ENCODE measurements at regions of chr22 and their contacts with region 1.

Region 1: DNA sequence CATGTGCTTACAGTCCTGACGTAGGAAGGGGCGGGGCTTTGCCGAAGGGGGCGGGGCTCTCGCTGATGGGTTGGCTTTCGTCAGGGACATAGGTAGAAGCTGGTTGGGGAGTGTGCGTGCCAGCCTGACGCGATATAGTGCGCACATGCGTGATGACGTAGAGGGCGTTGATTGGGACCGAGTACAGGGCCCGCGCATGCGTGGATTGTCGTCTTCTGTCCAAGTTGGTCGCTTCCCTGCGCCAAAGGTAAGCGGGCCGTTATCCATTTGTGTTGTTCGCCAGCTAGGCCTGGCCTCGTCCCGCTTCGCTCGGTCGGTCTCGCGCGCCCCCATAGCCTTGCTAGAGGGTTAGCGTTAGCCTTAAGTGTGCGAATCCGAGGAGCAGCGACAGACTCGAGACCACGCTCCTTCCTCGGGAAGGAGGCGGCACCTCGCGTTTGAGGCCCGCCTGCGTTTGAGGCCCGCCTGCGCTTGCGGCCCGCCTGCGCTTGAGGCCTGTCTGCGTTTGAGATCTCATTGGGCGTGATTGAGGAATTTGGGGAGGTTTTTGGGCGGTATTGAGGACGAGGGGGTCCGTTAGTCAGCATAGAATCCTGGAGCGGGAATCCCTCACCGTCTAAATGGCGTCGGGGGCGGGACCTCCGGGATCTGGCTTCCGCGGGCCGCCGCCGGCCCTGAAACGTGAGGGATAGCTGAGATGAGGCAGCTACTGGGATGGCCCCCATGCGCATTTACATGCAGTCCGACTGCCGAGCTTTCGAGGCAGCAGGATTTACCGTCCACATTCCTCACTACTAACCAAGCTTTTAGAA is at the start of gene XRCC6:
- DNase-seq: peak; percentile 99
- ATAC-seq: peak; percentile 92
- H3K4me3 Mint-ChIP-seq: peak within 1 kb of the TSS; percentile 98
- H3K27ac Mint-ChIP-seq: peak within 1 kb of the TSS; percentile 98
- H3K4me1 Mint-ChIP-seq: peaks cover 38% of the 10 kb centered on the region
- H3K27me3 Mint-ChIP-seq: no peaks in the 10 kb centered on the region
- CTCF ChIP-seq: no peak
- total RNA-seq, gene XRCC6: 297 and 319 TPM in 2 replicates

Region 2: DNA sequence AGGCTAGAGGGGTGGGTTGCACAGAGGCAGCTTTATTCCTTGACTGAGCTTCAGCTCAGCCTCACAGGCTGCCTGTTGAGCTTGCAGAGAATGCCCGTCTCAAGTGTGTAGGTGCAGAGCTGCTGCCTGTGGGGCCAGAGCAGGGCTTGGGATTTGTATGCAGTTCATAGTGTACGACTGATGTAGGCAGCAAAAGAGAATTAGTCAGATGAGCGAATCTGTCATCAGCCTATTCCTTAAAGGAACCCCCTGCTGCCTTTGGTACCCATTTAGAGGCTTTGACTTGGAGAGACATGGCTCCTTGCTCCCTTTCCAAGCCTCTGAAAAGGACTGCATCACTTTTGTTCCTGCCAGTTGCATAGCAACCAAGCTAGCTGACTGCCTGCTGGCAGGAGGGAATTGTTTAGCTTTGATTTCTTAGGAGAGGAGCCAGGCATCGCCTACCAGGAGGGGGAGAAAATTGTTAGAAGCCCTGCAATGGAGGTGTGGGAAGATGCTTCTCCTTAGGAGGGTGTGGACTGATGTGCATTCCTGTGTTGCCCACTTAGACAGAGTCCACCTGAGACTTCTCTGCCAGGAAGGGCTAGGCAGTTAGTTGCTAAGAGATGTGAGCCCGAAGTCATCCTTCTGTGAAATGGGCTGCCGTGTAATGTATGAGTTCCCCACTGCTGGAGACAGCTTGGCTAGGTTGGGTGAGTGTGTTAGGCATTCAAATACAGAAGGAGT is 141.5 kb before region 1 on chr22:
- CTCF ChIA-PET with region 1: no interaction called
- POLR2A ChIA-PET with region 1: interaction called, 15 read pairs
- intact Hi-C with region 1: no loop called
- DNase-seq: no peak
- ATAC-seq: no peak
- H3K4me3 Mint-ChIP-seq: peak overlapping the region; percentile 79
- H3K27ac Mint-ChIP-seq: peak overlapping the region; percentile 96
- H3K4me1 Mint-ChIP-seq: peaks cover 87% of the 10 kb centered on the region
- H3K27me3 Mint-ChIP-seq: no peaks in the 10 kb centered on the region
- CTCF ChIP-seq: no peak

Region 3: DNA sequence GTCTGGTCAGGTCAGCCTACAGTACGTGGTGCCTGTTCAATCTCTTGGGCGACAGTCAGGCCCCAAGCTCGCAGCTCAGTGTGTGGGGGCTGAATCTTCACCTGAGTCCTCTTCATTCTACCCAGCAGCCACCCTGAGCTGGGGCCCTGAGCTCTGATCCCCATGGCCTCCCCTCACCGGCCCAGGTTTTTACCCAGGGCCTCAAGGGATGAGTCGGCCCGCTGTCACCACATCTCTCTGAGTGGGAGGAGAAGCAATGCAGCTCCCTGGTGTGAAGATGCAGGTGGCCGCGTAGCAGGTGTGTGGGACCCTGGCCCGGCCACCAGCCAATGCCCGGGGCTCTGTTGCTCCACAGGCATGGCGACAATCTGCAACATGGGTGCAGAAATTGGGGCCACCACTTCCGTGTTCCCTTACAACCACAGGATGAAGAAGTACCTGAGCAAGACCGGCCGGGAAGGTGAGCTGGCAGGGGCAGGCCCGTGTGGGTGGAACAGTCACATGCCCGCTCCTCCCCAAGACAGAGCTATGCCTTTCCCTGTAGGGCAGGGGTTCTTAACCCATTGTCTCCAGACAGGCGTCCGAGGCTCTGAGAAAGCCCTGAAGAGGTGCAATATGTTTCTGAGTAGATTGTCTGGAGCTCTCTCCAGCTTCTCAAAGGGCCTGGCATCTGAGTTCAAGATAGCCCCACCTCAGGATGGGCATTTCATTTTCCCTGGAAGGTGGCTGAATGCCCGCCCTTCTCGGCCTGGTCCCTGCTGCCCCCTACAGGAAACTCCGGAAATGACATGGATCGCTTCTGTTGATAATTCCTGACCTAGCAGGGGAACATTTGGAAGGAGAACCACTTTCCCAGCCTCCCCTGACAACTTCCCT is 103.9 kb before region 1 on chr22:
- CTCF ChIA-PET with region 1: no interaction called
- POLR2A ChIA-PET with region 1: no interaction called
- intact Hi-C with region 1: no loop called
- DNase-seq: peak; percentile 41
- ATAC-seq: peak; percentile 60
- H3K4me3 Mint-ChIP-seq: no peak overlapping the region
- H3K27ac Mint-ChIP-seq: no peak overlapping the region
- H3K4me1 Mint-ChIP-seq: no peaks in the 10 kb centered on the region
- H3K27me3 Mint-ChIP-seq: no peaks in the 10 kb centered on the region
- CTCF ChIP-seq: no peak

Region 4: DNA sequence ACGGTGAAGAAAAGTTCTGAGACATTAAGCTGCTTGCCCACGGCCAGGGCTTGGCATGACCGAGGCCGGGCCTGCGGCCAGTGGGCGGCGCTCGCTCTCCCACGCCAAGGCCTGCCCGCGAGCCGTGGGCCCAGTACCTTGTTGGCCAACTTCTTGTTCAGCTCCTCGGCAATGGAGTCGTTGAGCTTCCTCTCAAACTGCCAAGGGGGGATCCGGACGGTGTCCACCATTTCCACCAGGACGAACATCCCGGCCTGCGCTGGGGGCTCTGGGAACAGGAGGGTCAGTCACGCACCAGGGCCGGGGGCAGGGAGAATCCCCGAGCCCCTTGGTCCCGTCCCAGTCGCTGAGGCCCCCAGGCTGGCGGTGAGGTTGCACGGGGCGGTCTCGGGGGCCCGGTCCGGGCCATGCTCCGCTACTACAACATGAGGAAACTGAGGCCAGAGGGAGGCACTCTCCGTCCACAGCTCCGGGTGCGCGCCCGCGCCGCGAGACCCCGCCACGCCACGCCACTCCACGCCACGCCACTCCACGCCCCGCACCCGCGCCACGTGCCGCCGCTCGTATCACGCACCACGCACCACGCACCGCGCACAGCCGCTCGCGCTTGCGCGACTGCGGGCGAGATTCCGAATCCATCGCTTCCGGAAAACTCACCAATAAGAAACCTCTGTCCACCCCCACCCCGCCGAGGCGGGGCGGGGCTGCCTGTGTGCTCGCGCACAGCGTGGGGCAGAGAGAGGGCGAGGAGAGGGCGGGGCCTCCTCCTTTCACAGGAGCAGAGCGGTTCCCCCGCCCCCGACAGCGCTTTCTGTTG is 77.2 kb before region 1 on chr22 and contains the start of gene POLR3H:
- CTCF ChIA-PET with region 1: interaction called, 9 read pairs
- POLR2A ChIA-PET with region 1: interaction called, 19 read pairs
- intact Hi-C with region 1: loop called (anchors 1 kb)
- DNase-seq: peak; percentile 93
- ATAC-seq: peak; percentile 99
- H3K4me3 Mint-ChIP-seq: peak within 1 kb of the TSS; percentile 96
- H3K27ac Mint-ChIP-seq: peak within 1 kb of the TSS; percentile 86
- H3K4me1 Mint-ChIP-seq: peaks cover 43% of the 10 kb centered on the region
- H3K27me3 Mint-ChIP-seq: no peaks in the 10 kb centered on the region
- CTCF ChIP-seq: no peak
- total RNA-seq, gene POLR3H: 39.0 and 43.9 TPM in 2 replicates

Region 5: DNA sequence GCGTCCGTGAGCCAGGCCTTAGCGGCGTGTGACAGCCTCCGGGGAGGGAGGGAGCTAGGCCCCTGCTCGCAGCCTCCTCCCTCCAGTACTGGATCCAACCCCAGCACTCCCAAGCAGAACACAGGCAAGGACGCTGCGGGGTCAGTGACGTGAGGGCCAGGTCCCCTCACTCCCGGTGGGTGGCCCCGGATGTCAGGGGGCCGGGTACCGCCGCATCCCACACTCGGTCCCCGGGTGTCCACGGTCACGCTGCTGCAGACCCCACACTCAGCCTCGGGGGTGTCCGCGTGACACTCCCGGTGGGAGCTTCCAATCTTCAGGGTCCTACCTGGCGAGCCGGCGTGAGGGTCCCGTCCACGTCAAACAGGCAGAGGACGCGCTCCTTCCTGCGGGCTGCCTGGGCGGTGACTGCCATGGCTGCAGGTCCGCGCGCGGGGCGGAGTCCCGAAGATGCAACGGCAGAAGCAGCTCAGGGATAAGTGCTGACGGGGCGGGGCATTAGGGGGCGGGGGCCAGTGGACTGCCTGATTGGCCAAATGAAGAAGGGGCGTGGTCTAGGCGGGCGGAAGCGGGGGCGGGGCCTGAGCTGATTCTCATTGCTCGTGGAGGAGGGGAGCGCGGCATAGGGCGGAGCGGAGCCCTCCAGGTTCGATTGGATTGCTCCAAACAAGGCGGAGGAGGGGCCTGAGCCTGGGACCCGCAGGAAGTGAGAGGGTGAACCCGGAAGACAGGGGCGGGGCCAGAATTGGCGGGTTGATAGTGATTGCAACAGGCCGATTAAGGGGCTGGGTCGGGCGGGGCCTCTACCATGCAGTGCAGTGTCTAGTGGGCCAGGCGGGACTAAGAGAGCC is 31.7 kb before region 1 on chr22 and contains the start of gene PMM1:
- CTCF ChIA-PET with region 1: interaction called, 3 read pairs
- POLR2A ChIA-PET with region 1: interaction called, 63 read pairs
- intact Hi-C with region 1: loop called (anchors 1 kb)
- DNase-seq: peak; percentile 98
- ATAC-seq: peak; percentile 98
- H3K4me3 Mint-ChIP-seq: peak within 1 kb of the TSS; percentile 91
- H3K27ac Mint-ChIP-seq: peak within 1 kb of the TSS; percentile 88
- H3K4me1 Mint-ChIP-seq: peaks cover 12% of the 10 kb centered on the region
- H3K27me3 Mint-ChIP-seq: no peaks in the 10 kb centered on the region
- CTCF ChIP-seq: no peak
- total RNA-seq, gene PMM1: 13.0 and 15.1 TPM in 2 replicates

Region 6: GRCh38 chr22:41603873-41604332 is 17.4 kb before region 1 on chr22:
- CTCF ChIA-PET with region 1: no interaction called
- POLR2A ChIA-PET with region 1: interaction called, 16 read pairs
- intact Hi-C with region 1: no loop called
- DNase-seq: no peak
- ATAC-seq: peak; percentile 95
- H3K4me3 Mint-ChIP-seq: no peak overlapping the region
- H3K27ac Mint-ChIP-seq: peak overlapping the region; percentile 35
- H3K4me1 Mint-ChIP-seq: peaks cover 7% of the 10 kb centered on the region
- H3K27me3 Mint-ChIP-seq: no peaks in the 10 kb centered on the region
- CTCF ChIP-seq: no peak

Region 7: DNA sequence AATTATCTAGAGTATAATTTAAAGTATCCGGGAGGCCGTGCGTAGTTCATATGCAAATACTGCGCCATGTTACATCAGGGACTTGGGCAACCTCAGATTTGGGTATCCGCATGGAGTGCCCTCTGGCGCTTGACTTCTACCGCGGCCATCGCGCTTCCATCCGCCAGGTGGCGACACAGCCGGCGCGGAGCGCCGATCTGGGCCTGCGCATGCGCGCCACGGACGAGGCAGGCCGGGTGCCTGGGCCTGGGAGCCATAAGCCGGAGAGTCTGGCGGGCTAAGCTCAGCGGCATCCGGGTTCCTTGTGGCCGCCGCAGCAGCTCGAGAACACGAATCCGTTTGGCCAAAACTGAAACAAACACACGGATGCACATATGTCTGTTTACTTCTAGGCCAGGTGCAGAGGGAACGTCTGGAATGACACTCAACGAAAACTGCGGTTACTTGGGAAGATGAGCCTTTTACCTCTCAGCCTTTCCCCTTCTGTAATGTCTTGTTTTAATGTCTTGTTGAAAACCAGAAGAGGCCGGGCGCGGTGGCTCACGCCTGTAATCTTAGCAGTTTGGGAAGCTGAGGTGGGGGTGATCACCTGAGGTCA is 45.5 kb after region 1 on chr22:
- CTCF ChIA-PET with region 1: no interaction called
- POLR2A ChIA-PET with region 1: interaction called, 6 read pairs
- intact Hi-C with region 1: loop called (anchors 2 kb)
- DNase-seq: peak; percentile 94
- ATAC-seq: peak; percentile 95
- H3K4me3 Mint-ChIP-seq: peak overlapping the region; percentile 84
- H3K27ac Mint-ChIP-seq: peak overlapping the region; percentile 92
- H3K4me1 Mint-ChIP-seq: peaks cover 5% of the 10 kb centered on the region
- H3K27me3 Mint-ChIP-seq: no peaks in the 10 kb centered on the region
- CTCF ChIP-seq: peak; percentile 74

Region 8: DNA sequence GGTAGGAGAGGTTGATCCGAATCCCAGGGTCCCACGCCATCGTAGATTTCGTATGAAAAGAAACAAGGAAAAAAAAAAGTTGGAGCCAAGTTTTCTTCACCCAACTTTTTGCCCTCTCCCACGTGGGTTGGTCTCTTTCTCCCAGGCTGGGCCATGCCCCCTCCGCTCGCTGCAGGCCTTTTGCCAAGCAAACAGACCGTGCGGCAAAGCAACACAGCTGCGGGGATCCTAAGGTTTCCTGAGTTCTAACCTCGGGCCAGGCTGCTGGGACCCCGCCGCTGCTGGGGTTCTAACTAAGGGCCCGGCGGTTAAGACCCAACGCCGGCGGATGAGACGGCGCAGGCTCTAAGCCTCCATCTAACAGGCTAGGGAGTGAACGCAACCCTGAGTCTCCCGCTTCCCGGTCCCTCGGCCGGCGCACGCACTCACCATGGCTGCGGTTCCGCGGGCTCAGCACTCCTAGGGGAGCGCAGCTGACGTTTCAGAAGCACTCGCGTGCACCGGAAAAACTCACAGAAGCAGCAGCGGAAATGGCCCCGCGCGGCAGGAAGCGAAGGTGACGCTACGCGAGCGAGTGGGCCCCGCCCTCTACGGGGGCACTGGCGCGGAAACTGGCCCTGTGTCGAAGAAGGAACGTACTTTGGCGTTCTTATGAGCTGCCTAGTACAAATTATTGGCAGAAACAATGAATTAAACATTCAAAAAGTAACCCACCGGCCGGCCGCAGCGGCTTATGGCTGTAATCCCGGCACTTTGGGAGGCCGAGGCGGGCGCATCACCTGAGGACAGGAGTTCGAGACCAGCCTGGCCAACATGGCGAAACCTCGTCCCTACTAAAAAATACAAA is 67.3 kb after region 1 on chr22 and contains the start of gene SNU13:
- CTCF ChIA-PET with region 1: no interaction called
- POLR2A ChIA-PET with region 1: interaction called, 7 read pairs
- intact Hi-C with region 1: loop called (anchors 1 kb)
- DNase-seq: peak; percentile 88
- ATAC-seq: peak; percentile 94
- H3K4me3 Mint-ChIP-seq: peak within 1 kb of the TSS; percentile 97
- H3K27ac Mint-ChIP-seq: peak within 1 kb of the TSS; percentile 96
- H3K4me1 Mint-ChIP-seq: peaks cover 28% of the 10 kb centered on the region
- H3K27me3 Mint-ChIP-seq: no peaks in the 10 kb centered on the region
- CTCF ChIP-seq: no peak
- total RNA-seq, gene SNU13: 157 and 165 TPM in 2 replicates